Naive thymus-derived CD4-positive, alpha-beta T cell (primary cell): ENCODE measurements at regions of chr9 and their contacts with region 1.

Region 1: GRCh38 chr9:124708633-124709291 is 62.3 kb downstream of the NR6A1 start:
- DNase-seq: no peak
- ATAC-seq: no peak
- H3K4me3 ChIP-seq: no peak overlapping the region
- H3K4me3 Mint-ChIP-seq: no peak overlapping the region
- H3K27ac ChIP-seq: no peak overlapping the region
- H3K27ac Mint-ChIP-seq: no peak overlapping the region
- H3K4me1 ChIP-seq: no peaks in the 10 kb centered on the region
- H3K4me1 Mint-ChIP-seq: peaks cover 0 to 5% (median 0%) of the 10 kb centered on the region in 7 donors
- H3K27me3 ChIP-seq: no peaks in the 10 kb centered on the region
- H3K27me3 Mint-ChIP-seq: peaks cover 9 to 44% (median 16%) of the 10 kb centered on the region in 5 donors

Region 2: DNA sequence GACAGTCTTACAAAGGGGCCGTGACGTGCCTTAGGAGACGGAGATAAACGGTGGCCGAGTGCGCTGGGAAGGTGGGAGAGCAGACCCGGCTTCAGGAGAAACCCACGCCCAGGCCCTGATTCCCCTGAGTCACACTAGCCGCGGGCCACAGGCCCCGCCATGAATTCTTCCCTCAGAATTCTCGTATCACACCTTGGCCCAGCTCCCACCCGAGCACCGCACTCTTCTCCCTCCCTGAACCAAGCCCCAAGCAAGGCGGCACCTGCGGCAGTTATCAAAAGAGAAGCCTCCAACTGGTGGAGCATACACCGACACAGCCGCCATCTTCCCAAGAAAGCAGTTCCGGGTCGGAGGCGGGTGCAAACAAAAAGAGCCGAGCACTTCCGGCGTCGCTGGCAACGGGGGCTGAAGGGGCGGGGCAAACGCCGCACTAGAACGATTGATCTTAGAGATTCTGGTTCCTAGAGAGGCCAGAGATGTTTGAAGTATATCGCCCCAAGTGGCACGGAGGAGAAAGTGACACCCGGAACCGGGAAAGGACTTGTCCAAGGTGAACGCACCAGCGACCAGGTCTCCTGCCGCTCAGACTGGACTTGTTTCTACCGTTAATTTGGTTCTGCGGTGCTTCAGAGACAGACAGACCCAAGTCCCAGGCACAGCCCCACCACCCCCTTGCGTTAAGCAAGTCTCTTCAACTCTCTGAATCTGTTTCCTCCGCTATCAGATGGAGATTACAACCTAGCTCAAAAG is 293.5 kb before region 1 on chr9 and contains the start of gene PSMB7:
- CTCF ChIA-PET with region 1: interaction called, 3 read pairs
- POLR2A ChIA-PET with region 1: no interaction called
- intact Hi-C with region 1: loop called (anchors 5 kb)
- DNase-seq: peak; percentile 91 to 97 (median 96)
- ATAC-seq: peak; percentile 99
- H3K4me3 ChIP-seq: peak within 1 kb of the TSS; percentile 75
- H3K4me3 Mint-ChIP-seq: peak within 1 kb of the TSS; percentile 93 to 99 (median 97)
- H3K27ac ChIP-seq: peak within 1 kb of the TSS; percentile 78
- H3K27ac Mint-ChIP-seq: peak within 1 kb of the TSS; percentile 82 to 98 (median 94)
- H3K4me1 ChIP-seq: peaks cover 13 to 18% of the 10 kb centered on the region in 2 donors
- H3K4me1 Mint-ChIP-seq: peaks cover 16 to 46% (median 39%) of the 10 kb centered on the region in 7 donors
- H3K27me3 ChIP-seq: no peaks in the 10 kb centered on the region
- H3K27me3 Mint-ChIP-seq: no peaks in the 10 kb centered on the region
- total RNA-seq, gene PSMB7: 59.4 to 129 (median 63.2) TPM

Region 3: GRCh38 chr9:124617471-124618141 is 91.2 kb before region 1 on chr9:
- CTCF ChIA-PET with region 1: interaction called, 78 read pairs
- POLR2A ChIA-PET with region 1: no interaction called
- intact Hi-C with region 1: loop called (anchors 1 kb)
- DNase-seq: peak; percentile 36 to 76 (median 66)
- ATAC-seq: peak; percentile 90
- H3K4me3 ChIP-seq: no peak overlapping the region
- H3K4me3 Mint-ChIP-seq: no peak overlapping the region
- H3K27ac ChIP-seq: no peak overlapping the region
- H3K27ac Mint-ChIP-seq: no peak overlapping the region
- H3K4me1 ChIP-seq: no peaks in the 10 kb centered on the region
- H3K4me1 Mint-ChIP-seq: peaks cover 0 to 12% (median 0%) of the 10 kb centered on the region in 7 donors
- H3K27me3 ChIP-seq: no peaks in the 10 kb centered on the region
- H3K27me3 Mint-ChIP-seq: peaks cover 5 to 22% (median 13%) of the 10 kb centered on the region in 5 donors

Region 4: GRCh38 chr9:124676159-124676551 is 32.6 kb before region 1 on chr9:
- CTCF ChIA-PET with region 1: interaction called, 15 read pairs
- POLR2A ChIA-PET with region 1: no interaction called
- intact Hi-C with region 1: no loop called
- DNase-seq: no peak
- ATAC-seq: no peak
- H3K4me3 ChIP-seq: no peak overlapping the region
- H3K4me3 Mint-ChIP-seq: no peak overlapping the region
- H3K27ac ChIP-seq: no peak overlapping the region
- H3K27ac Mint-ChIP-seq: no peak overlapping the region
- H3K4me1 ChIP-seq: peaks cover 0 to 6% of the 10 kb centered on the region in 2 donors
- H3K4me1 Mint-ChIP-seq: peaks cover 3 to 26% (median 16%) of the 10 kb centered on the region in 7 donors
- H3K27me3 ChIP-seq: no peaks in the 10 kb centered on the region
- H3K27me3 Mint-ChIP-seq: peaks cover 0 to 28% (median 0%) of the 10 kb centered on the region in 5 donors

Region 5: GRCh38 chr9:124884376-124884775 is 175.6 kb after region 1 on chr9:
- CTCF ChIA-PET with region 1: no interaction called
- POLR2A ChIA-PET with region 1: no interaction called
- intact Hi-C with region 1: no loop called
- DNase-seq: no peak
- ATAC-seq: no peak
- H3K4me3 ChIP-seq: no peak overlapping the region
- H3K4me3 Mint-ChIP-seq: no peak overlapping the region
- H3K27ac ChIP-seq: no peak overlapping the region
- H3K27ac Mint-ChIP-seq: no peak overlapping the region
- H3K4me1 ChIP-seq: peaks cover 0 to 9% of the 10 kb centered on the region in 2 donors
- H3K4me1 Mint-ChIP-seq: peaks cover 0 to 6% (median 0%) of the 10 kb centered on the region in 7 donors
- H3K27me3 ChIP-seq: no peaks in the 10 kb centered on the region
- H3K27me3 Mint-ChIP-seq: no peaks in the 10 kb centered on the region

Region 6: DNA sequence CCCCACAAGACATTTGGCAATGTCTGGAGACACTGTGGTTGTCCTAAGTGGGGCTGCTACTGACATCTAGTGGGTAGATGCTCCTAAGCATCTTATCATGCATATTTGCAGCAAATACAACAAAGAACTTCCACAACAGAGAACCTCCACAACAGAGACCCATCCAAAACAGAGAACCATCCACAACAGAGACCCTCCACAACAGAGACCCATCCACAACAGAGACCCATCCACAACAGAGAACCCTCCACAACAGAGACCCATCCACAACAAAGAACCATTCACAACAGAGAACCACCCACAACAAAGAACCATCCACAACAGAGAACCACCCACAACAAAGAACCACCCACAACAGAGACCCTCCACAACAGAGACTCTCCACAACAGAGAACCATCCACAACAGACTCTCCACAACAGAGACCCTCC is 186.0 kb after region 1 on chr9:
- CTCF ChIA-PET with region 1: no interaction called
- POLR2A ChIA-PET with region 1: no interaction called
- intact Hi-C with region 1: loop called in 1 of 2 experiments (anchors 1 kb)
- DNase-seq: peak in 7 of 9 donors; percentile 68 to 80 (median 75)
- ATAC-seq: peak; percentile 87
- H3K4me3 ChIP-seq: no peak overlapping the region
- H3K4me3 Mint-ChIP-seq: peak overlapping the region in 6 of 10 donors; percentile 1 to 88 (median 66)
- H3K27ac ChIP-seq: peak overlapping the region; percentile 30
- H3K27ac Mint-ChIP-seq: peak overlapping the region; percentile 5 to 98 (median 89)
- H3K4me1 ChIP-seq: peaks cover 0 to 4% of the 10 kb centered on the region in 2 donors
- H3K4me1 Mint-ChIP-seq: peaks cover 7 to 23% (median 18%) of the 10 kb centered on the region in 7 donors
- H3K27me3 ChIP-seq: no peaks in the 10 kb centered on the region
- H3K27me3 Mint-ChIP-seq: peaks cover 0 to 9% (median 0%) of the 10 kb centered on the region in 5 donors